Caco-2 (cell line): ENCODE measurements at regions of chr7 and their contacts with region 1.

Region 1: GRCh38 chr7:23273141-23273599 is 26.0 kb upstream of the MALSU1 start:
- DNase-seq: peak; percentile 96 to 97
- H3K4me3 ChIP-seq: peak overlapping the region; percentile 15; the same call in 1 of the 2 replicates
- H3K4me3 Mint-ChIP-seq: peak overlapping the region; percentile 68
- H3K27ac Mint-ChIP-seq: peak overlapping the region; percentile 74
- H3K4me1 ChIP-seq: peaks cover 5% of the 10 kb centered on the region
- H3K4me1 Mint-ChIP-seq: peaks cover 9% of the 10 kb centered on the region
- H3K27me3 ChIP-seq: no peaks in the 10 kb centered on the region
- H3K27me3 Mint-ChIP-seq: no peaks in the 10 kb centered on the region
- CTCF ChIP-seq: peak; percentile 93 to 95

Region 2: DNA sequence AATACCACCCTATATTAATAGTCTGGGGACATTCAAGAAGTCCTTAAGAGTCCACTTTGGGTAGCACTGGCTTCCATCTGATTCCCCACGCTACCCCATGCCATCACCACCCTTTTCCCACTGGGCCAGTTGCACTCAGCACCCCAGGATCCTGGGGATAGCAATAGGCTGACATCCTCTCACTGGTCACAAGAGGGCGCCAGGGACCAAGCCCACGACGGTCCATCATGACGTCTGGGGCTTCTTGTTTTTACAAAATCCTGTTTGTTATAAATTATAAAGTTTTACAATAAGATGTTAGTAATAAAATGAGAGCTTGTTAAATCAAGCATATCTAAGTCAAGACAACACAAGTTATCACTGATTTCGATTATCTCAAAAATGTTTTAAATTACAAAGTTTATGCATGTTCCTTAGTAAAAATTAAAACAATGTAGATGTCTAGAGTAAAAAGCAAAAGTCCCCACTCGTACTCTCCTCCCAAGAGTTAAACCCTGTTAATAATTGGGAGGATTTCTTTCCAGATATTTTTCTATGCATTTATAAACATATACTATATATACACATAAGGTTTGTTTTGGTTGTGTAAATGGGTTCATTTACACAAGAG is 11.2 kb before region 1 on chr7:
- CTCF ChIA-PET with region 1: interaction called, 20 read pairs
- POLR2A ChIA-PET with region 1: no interaction called
- intact Hi-C with region 1: loop called (anchors 1 kb)
- DNase-seq: peak; percentile 62 to 77
- H3K4me3 ChIP-seq: no peak overlapping the region
- H3K4me3 Mint-ChIP-seq: no peak overlapping the region
- H3K27ac Mint-ChIP-seq: no peak overlapping the region
- H3K4me1 ChIP-seq: no peaks in the 10 kb centered on the region
- H3K4me1 Mint-ChIP-seq: peaks cover 7% of the 10 kb centered on the region
- H3K27me3 ChIP-seq: no peaks in the 10 kb centered on the region
- H3K27me3 Mint-ChIP-seq: no peaks in the 10 kb centered on the region
- CTCF ChIP-seq: peak; percentile 85 to 93

Region 3: DNA sequence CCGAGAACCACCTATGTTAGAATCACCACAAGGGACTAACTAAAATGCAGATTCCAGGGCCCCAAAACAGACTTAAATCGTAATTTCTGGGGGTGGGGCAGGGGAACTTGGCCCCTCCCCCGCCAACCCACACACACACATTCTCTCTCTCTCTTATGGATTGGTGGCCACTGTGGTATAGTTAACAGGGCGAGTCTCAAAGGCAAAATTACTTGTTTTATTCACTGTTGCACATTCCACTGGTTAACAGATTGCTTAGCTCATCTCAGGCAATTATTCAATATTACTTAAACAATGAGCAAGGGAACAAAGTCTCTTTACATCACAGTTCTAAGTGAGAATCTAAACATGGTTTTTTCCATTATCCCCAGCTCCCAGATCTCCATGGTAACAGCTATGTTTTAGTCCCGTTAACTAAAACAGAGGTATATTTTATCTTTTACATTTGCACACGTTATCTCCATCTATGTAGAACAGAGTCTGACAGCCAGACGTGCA is 158.6 kb after region 1 on chr7:
- CTCF ChIA-PET with region 1: interaction called, 3 read pairs
- POLR2A ChIA-PET with region 1: no interaction called
- intact Hi-C with region 1: loop called (anchors 2 kb)
- DNase-seq: peak in 1 of 2 experiments; percentile 36
- H3K4me3 ChIP-seq: no peak overlapping the region
- H3K4me3 Mint-ChIP-seq: peak overlapping the region; percentile 14
- H3K27ac Mint-ChIP-seq: peak overlapping the region; percentile 79
- H3K4me1 ChIP-seq: peaks cover 19% of the 10 kb centered on the region; the same call in 1 of the 2 replicates
- H3K4me1 Mint-ChIP-seq: peaks cover 36% of the 10 kb centered on the region
- H3K27me3 ChIP-seq: no peaks in the 10 kb centered on the region
- H3K27me3 Mint-ChIP-seq: no peaks in the 10 kb centered on the region
- CTCF ChIP-seq: no peak

Region 4: DNA sequence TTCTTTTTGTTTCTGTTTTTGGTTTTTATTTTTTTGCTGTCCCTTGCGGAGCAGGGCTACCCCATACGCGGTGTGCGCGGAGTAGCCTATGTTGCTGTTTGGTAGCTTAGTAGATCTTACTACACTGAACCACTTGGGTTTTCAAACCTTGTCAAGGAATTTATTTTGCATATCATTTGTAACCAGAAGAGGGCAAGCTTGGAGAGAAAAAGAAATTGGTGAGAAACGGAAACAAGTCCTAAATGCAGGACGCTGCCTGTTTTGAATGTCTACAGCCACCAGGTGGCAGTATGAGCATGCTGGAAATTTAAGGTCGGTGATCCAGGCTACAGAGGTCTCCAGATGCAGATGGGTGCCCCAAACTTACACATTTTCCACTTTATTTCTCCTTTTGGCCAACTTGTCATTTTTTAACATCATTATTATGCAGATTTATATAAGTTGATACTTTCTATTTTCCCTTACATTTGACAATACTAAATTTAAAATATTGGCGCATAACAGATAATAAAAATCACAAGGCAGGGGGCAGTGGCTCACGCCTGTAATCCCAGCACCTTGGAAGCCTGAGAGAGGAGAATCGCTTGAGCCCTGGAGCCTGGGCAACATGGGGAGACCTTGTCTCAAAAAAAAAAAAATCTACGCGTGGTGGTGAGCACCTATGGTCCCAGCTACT is 273.9 kb after region 1 on chr7:
- CTCF ChIA-PET with region 1: interaction called, 44 read pairs
- POLR2A ChIA-PET with region 1: no interaction called
- intact Hi-C with region 1: loop called (anchors 1 kb)
- DNase-seq: peak; percentile 86 to 87
- H3K4me3 ChIP-seq: no peak overlapping the region
- H3K4me3 Mint-ChIP-seq: no peak overlapping the region
- H3K27ac Mint-ChIP-seq: no peak overlapping the region
- H3K4me1 ChIP-seq: no peaks in the 10 kb centered on the region
- H3K4me1 Mint-ChIP-seq: peaks cover 12% of the 10 kb centered on the region
- H3K27me3 ChIP-seq: no peaks in the 10 kb centered on the region
- H3K27me3 Mint-ChIP-seq: peaks cover 2% of the 10 kb centered on the region
- CTCF ChIP-seq: peak; percentile 93 to 96

Region 5: GRCh38 chr7:23696916-23697441 is 423.8 kb after region 1 on chr7:
- CTCF ChIA-PET with region 1: no interaction called
- POLR2A ChIA-PET with region 1: no interaction called
- intact Hi-C with region 1: no loop called
- DNase-seq: peak; percentile 81 to 82
- H3K4me3 ChIP-seq: no peak overlapping the region
- H3K4me3 Mint-ChIP-seq: no peak overlapping the region
- H3K27ac Mint-ChIP-seq: peak overlapping the region; percentile 26
- H3K4me1 ChIP-seq: peaks cover 4% of the 10 kb centered on the region; the same call in 1 of the 2 replicates
- H3K4me1 Mint-ChIP-seq: peaks cover 8% of the 10 kb centered on the region
- H3K27me3 ChIP-seq: no peaks in the 10 kb centered on the region
- H3K27me3 Mint-ChIP-seq: no peaks in the 10 kb centered on the region
- CTCF ChIP-seq: peak; percentile 76 to 82